ENCODE measurements at regions of chr17 and their contacts with region 1.

Region 1: GRCh38 chr17:28390984-28391800 is 14.8 kb downstream of the SLC46A1 start:
- H3K4me3 ChIP-seq: no peak overlapping the region
- H3K27ac ChIP-seq: no peak overlapping the region
- H3K4me1 ChIP-seq: no peaks in the 10 kb centered on the region
- CTCF ChIP-seq: no peak

Region 2: DNA sequence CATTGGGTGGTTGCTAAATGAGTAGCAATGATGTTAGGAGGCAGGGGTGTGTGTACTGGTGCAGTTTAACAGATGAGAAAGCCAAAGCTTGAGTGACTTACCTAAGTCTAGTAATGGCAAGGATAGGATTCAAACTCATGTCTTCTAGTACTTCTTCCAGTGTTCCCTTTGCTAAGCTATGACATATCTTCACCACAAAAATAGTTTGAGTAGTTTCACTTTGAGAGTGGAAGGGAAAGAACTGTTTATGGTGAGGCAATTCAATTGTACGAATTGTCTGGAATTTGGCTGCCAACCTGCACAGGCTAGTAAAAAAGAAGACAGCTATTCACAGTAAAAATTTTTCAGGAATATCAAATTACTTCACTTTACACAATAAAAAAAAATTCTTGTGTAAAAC is 210.7 kb before region 1 on chr17:
- CTCF ChIA-PET with region 1: no interaction called
- POLR2A ChIA-PET with region 1: no interaction called
- H3K4me3 ChIP-seq: no peak overlapping the region
- H3K27ac ChIP-seq: no peak overlapping the region
- H3K4me1 ChIP-seq: no peaks in the 10 kb centered on the region
- CTCF ChIP-seq: no peak

Region 3: DNA sequence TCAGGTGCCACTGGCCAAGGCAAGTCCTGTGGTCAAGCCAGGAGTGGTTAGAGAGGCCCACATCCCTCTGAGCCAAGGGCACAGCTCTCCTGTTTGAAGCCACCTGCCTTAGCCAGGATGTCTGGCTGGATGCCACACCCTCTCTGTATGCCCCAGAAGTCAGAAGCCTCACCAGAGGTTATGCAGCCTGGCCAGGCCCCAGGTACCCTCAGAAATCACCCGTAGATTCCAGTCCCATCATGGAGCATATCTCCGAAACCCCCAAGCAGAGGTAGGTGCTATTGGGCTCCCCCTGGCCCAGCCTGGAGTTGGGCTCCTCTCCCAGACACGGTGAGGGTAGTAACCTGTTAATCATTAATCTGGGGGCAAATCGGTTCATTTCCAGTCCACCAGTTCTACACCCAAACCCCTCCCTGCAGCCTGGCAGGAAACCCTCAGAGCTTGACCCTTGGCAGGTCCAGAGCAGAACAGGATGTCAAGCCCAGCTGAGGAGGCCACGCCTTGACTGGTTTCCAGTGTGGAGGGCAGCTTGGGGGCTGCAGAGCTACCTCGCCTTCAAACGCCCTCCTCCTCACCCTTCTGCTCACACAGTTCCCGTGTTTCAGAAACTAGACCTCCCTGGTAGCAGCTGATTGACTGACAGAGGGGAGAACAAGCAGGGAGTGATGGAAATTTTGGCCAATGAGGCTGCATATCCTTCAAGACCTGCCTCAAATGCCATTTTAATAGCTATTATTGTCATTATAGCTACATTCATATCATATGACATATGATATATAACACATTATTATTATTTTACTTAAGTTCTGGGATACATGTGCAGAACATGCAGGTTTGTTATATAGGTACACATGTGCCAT is 132.6 kb before region 1 on chr17:
- CTCF ChIA-PET with region 1: no interaction called
- POLR2A ChIA-PET with region 1: no interaction called
- H3K4me3 ChIP-seq: no peak overlapping the region
- H3K27ac ChIP-seq: no peak overlapping the region
- H3K4me1 ChIP-seq: 0 out of 2 replicates have a peak, but pooled peaks cover 3% of the 10 kb centered on the region
- CTCF ChIP-seq: no peak

Region 4: GRCh38 chr17:28405632-28406472 is 14.7 kb after region 1 on chr17 and contains the start of gene SLC46A1:
- CTCF ChIA-PET with region 1: no interaction called
- POLR2A ChIA-PET with region 1: interaction called, 11 read pairs
- H3K4me3 ChIP-seq: peak within 1 kb of the TSS; percentile 80
- H3K27ac ChIP-seq: peak within 1 kb of the TSS; percentile 79; the same call in 1 of the 2 replicates
- H3K4me1 ChIP-seq: no peaks in the 10 kb centered on the region
- CTCF ChIP-seq: no peak

Region 5: DNA sequence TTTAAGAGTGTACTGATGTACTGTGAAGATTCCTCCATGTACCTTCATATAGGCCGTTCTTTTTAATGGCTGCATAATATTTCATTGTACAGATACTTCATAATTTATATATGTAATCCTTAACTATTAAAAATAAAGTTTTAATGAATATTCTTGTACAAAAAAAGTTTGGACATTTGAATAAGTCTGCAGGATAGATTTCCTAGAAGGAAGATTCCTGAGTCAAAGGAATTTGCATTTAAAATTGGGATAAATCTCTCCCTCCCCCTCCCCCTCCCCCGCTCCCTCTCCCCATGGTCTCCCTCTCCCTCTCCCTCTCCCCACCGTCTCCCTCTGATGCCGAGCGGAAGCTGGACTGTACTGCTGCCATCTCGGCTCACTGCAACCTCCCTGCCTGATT is 66.7 kb after region 1 on chr17:
- CTCF ChIA-PET with region 1: no interaction called
- POLR2A ChIA-PET with region 1: no interaction called
- H3K4me3 ChIP-seq: no peak overlapping the region
- H3K27ac ChIP-seq: no peak overlapping the region
- H3K4me1 ChIP-seq: no peaks in the 10 kb centered on the region
- CTCF ChIP-seq: no peak

Region 6: DNA sequence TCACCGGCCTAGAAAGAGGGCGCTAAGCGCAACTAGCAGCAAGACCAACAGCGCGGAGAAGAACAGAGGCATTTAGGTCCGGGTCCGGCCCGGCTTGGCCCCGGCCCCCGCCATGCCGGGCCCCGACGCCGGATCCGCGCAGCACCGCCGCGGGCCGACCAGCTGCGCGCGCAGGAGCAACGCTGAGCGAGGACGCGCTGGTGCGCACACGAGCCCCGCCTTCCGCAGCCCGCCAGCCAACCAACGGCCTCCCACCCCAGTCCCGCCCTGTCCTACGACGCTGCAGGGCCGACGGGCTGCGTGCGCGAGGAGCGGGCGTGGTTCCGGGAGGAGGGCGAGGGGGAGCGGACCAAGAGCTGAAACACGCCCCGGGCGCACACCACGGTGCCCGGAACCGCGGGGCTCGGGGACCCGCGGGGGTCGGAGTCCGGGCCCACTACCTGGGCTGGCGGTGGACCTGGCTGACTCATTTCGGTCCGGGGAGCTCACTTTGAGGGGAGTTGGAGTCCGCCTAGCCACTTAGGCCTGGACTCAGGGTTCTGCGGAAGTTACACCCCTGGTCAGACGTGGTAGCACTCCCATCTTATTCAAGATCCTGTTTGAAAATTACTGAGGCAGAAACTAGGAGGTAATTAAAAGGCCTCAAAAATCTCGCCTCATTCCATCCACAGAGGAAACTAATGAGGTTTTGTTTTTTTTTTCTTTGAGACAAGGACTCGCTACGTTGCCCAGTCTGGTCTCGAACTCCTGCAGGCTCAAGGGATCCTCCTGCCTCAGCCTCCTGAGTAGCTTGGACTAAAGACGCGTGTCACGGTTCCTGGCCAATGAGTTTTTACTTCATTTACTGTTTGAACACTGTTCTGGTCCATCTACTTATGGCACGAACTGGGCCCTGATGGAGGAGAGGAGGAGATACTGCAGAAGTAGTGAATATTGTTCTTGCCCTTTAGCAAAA is 254.1 kb after region 1 on chr17 and contains the start of gene BLTP2:
- CTCF ChIA-PET with region 1: no interaction called
- POLR2A ChIA-PET with region 1: no interaction called
- H3K4me3 ChIP-seq: peak within 1 kb of the TSS; percentile 70
- H3K27ac ChIP-seq: peak within 1 kb of the TSS; percentile 55
- H3K4me1 ChIP-seq: peaks cover 5% of the 10 kb centered on the region
- CTCF ChIP-seq: no peak; the same call in 1 of the 2 replicates